HCT116 (cell line): ENCODE measurements at regions of chr5 and their contacts with region 1.

Region 1: DNA sequence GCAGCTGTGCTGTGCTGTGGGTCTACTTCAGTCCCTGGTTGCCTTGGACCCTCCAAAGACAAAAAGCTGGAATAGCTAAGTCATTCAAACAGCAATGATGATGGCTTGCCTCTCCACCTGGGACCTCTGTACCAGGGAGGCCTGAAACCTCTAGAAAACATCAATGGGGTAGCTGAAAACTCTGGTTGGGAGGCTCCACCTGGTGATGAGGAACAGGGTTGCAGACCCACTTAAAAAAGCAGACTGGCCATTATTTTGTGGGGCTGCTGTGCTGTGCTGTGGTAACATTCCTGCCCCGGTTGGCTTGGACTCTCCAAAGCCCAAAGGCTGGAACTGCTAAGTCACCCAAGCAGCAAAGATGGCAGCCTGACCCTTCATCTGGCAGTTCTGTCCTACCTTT is 839.3 kb upstream of the ARRDC3 start:
- DNase-seq: peak; percentile 12
- ATAC-seq: peak; percentile 68
- H3K4me3 ChIP-seq: no peak overlapping the region
- H3K27ac ChIP-seq: no peak overlapping the region
- H3K4me1 ChIP-seq: no peaks in the 10 kb centered on the region
- H3K27me3 ChIP-seq: no peaks in the 10 kb centered on the region
- CTCF ChIP-seq: peak; percentile 40 to 52 (median 42); a peak in 4 of 6 replicates
- POLR2A ChIP-seq: no peak
- RAD21 ChIP-seq: peak; percentile 67

Region 2: DNA sequence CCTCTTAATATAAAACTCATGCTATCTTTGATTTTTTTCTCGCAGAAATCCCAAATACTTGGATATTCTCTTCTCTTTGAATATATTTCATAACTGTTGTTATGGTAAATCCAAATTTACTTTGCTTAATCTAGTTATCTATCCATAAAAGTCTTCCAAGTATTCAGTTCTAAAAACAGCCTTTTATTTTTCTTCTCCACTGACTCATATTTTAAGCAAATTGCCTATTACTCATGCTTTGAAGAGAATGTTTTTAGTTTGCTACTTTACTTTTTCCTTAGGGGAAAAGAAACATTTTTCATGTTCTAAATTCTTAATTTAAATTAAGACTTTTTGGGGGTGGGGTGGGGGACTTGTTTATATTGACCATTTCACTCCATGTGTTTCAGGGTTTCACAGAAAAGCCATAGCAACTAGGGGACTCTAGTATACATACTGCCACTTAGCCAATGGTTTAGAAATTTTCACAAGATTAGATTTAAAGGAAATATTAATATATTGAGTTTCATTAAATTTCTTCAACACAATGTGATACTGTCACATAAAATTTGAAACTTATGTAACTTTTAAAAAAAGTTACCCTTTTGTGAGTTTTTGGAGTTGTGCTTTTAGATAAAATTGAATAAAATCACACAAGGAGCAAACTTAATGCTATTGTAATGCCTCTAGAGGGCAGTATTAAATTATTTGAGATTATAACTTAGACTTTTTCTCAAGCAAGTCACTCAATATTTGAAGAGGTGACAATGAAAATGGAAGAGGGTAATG is 293.5 kb before region 1 on chr5:
- CTCF ChIA-PET with region 1: no interaction called
- POLR2A ChIA-PET with region 1: no interaction called
- RAD21 ChIA-PET with region 1: no interaction called
- intact Hi-C with region 1: loop called (anchors 1 kb)
- DNase-seq: peak; percentile 10
- ATAC-seq: peak; percentile 62
- H3K4me3 ChIP-seq: no peak overlapping the region
- H3K27ac ChIP-seq: no peak overlapping the region
- H3K4me1 ChIP-seq: no peaks in the 10 kb centered on the region
- H3K27me3 ChIP-seq: no peaks in the 10 kb centered on the region
- CTCF ChIP-seq: peak; percentile 27 to 69 (median 48); a peak in 3 of 6 replicates
- POLR2A ChIP-seq: no peak
- RAD21 ChIP-seq: peak; percentile 71

Region 3: GRCh38 chr5:92353107-92354030 is 130.9 kb after region 1 on chr5:
- CTCF ChIA-PET with region 1: no interaction called
- POLR2A ChIA-PET with region 1: no interaction called
- RAD21 ChIA-PET with region 1: no interaction called
- intact Hi-C with region 1: no loop called
- DNase-seq: no peak
- ATAC-seq: no peak
- H3K4me3 ChIP-seq: no peak overlapping the region
- H3K27ac ChIP-seq: no peak overlapping the region
- H3K4me1 ChIP-seq: peaks cover 0 to 6% of the 10 kb centered on the region in 2 experiments; a peak in 2 of 4 replicates
- H3K27me3 ChIP-seq: no peaks in the 10 kb centered on the region
- CTCF ChIP-seq: no peak
- POLR2A ChIP-seq: no peak
- RAD21 ChIP-seq: no peak

Region 4: GRCh38 chr5:92409134-92409533 is 186.7 kb after region 1 on chr5:
- CTCF ChIA-PET with region 1: no interaction called
- POLR2A ChIA-PET with region 1: no interaction called
- RAD21 ChIA-PET with region 1: no interaction called
- intact Hi-C with region 1: no loop called
- DNase-seq: no peak
- ATAC-seq: no peak
- H3K4me3 ChIP-seq: no peak overlapping the region
- H3K27ac ChIP-seq: no peak overlapping the region
- H3K4me1 ChIP-seq: no peaks in the 10 kb centered on the region
- H3K27me3 ChIP-seq: no peaks in the 10 kb centered on the region
- CTCF ChIP-seq: no peak
- POLR2A ChIP-seq: no peak
- RAD21 ChIP-seq: no peak